SK-N-SH (cell line): ENCODE measurements at regions of chr4 and their contacts with region 1.

Region 1: GRCh38 chr4:15882675-15883086 is 55.9 kb downstream of the FGFBP1 start:
- DNase-seq: peak; percentile 57
- H3K4me3 ChIP-seq: no peak overlapping the region; a peak in 1 of 4 replicates
- H3K27ac ChIP-seq: no peak overlapping the region
- H3K4me1 ChIP-seq: peaks cover 0 to 3% of the 10 kb centered on the region in 2 experiments; a peak in 3 of 4 replicates
- H3K27me3 ChIP-seq: no peaks in the 10 kb centered on the region
- CTCF ChIP-seq: peak; percentile 96
- EP300 ChIP-seq: no peak
- RAD21 ChIP-seq: peak; percentile 89

Region 2: GRCh38 chr4:15479089-15479912 is 403.4 kb before region 1 on chr4:
- CTCF ChIA-PET with region 1: interaction called, 18 read pairs
- POLR2A ChIA-PET with region 1: no interaction called
- DNase-seq: peak; percentile 74
- H3K4me3 ChIP-seq: peak overlapping the region; percentile 49 to 55
- H3K27ac ChIP-seq: peak overlapping the region; percentile 58 to 93
- H3K4me1 ChIP-seq: peaks cover 10% of the 10 kb centered on the region in 2 experiments; a peak in 3 of 4 replicates
- H3K27me3 ChIP-seq: no peaks in the 10 kb centered on the region
- CTCF ChIP-seq: peak; percentile 79
- EP300 ChIP-seq: no peak
- RAD21 ChIP-seq: peak; percentile 94

Region 3: GRCh38 chr4:15848191-15848842 is 34.4 kb before region 1 on chr4:
- CTCF ChIA-PET with region 1: interaction called, 15 read pairs
- POLR2A ChIA-PET with region 1: no interaction called
- DNase-seq: no peak
- H3K4me3 ChIP-seq: no peak overlapping the region
- H3K27ac ChIP-seq: no peak overlapping the region
- H3K4me1 ChIP-seq: no peaks in the 10 kb centered on the region
- H3K27me3 ChIP-seq: no peaks in the 10 kb centered on the region
- CTCF ChIP-seq: no peak
- EP300 ChIP-seq: no peak
- RAD21 ChIP-seq: no peak

Region 4: GRCh38 chr4:15893962-15894361 is 11.3 kb after region 1 on chr4:
- CTCF ChIA-PET with region 1: interaction called, 19 read pairs
- POLR2A ChIA-PET with region 1: no interaction called
- DNase-seq: no peak
- H3K4me3 ChIP-seq: no peak overlapping the region
- H3K27ac ChIP-seq: peak overlapping the region in 1 of 2 experiments; percentile 61; a peak in 2 of 4 replicates
- H3K4me1 ChIP-seq: no peaks in the 10 kb centered on the region
- H3K27me3 ChIP-seq: no peaks in the 10 kb centered on the region
- CTCF ChIP-seq: no peak
- EP300 ChIP-seq: peak in 1 of 2 experiments; percentile 16; a peak in 1 of 4 replicates
- RAD21 ChIP-seq: no peak

Region 5: GRCh38 chr4:15926486-15926885 is 43.8 kb after region 1 on chr4:
- CTCF ChIA-PET with region 1: interaction called, 19 read pairs
- POLR2A ChIA-PET with region 1: no interaction called
- DNase-seq: no peak
- H3K4me3 ChIP-seq: no peak overlapping the region
- H3K27ac ChIP-seq: no peak overlapping the region
- H3K4me1 ChIP-seq: peaks cover under 1 to 6% of the 10 kb centered on the region in 2 experiments; a peak in 2 of 4 replicates
- H3K27me3 ChIP-seq: no peaks in the 10 kb centered on the region
- CTCF ChIP-seq: no peak
- EP300 ChIP-seq: no peak
- RAD21 ChIP-seq: no peak

Region 6: DNA sequence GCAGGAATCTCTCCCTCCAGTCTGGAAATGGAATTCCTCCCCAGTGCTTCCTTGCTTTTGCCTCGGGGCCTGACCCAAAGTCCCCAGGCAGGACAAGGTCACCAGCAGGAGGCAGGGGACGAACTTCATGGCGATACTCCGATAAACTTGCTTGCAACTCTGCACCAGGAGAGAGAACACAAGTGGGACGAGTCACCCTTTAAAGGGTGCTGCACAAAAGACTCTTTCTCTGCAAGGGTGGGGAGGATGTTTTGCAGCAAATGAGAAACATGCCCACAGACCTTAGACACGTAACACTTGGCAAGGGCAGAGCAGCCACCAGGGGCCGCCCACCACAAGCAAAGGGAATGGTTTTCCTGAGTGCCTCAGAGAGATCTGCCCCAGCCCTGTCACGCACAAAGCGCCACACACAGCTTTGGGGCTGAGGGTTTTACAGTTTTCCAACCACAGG is 80.3 kb after region 1 on chr4 and contains the start of gene FGFBP2:
- CTCF ChIA-PET with region 1: interaction called, 39 read pairs
- POLR2A ChIA-PET with region 1: no interaction called
- DNase-seq: peak; percentile 75
- H3K4me3 ChIP-seq: no peak within 1 kb of the TSS; a peak in 1 of 4 replicates
- H3K27ac ChIP-seq: no peak within 1 kb of the TSS
- H3K4me1 ChIP-seq: peaks cover 0 to 9% of the 10 kb centered on the region in 2 experiments; a peak in 1 of 4 replicates
- H3K27me3 ChIP-seq: no peaks in the 10 kb centered on the region
- CTCF ChIP-seq: peak; percentile 62
- EP300 ChIP-seq: no peak
- RAD21 ChIP-seq: peak; percentile 79
- polyA plus RNA-seq, gene FGFBP2: 0.62 and 1.7 TPM in 2 replicates